Transverse colon (tissue), 4 donors: ENCODE measurements at regions of chr2 and their contacts with region 1.

Region 1: GRCh38 chr2:40281021-40281940 is 170.6 kb downstream of the SLC8A1 start:
- DNase-seq: no peak
- H3K4me3 ChIP-seq: no peak overlapping the region
- H3K27ac ChIP-seq: peak overlapping the region; percentile 59 to 80 (median 70)
- H3K4me1 ChIP-seq: peaks cover 0 to 29% (median 2%) of the 10 kb centered on the region in 4 donors
- H3K27me3 ChIP-seq: no peaks in the 10 kb centered on the region
- CTCF ChIP-seq: no peak
- EP300 ChIP-seq: no peak
- POLR2A ChIP-seq: no peak

Region 2: DNA sequence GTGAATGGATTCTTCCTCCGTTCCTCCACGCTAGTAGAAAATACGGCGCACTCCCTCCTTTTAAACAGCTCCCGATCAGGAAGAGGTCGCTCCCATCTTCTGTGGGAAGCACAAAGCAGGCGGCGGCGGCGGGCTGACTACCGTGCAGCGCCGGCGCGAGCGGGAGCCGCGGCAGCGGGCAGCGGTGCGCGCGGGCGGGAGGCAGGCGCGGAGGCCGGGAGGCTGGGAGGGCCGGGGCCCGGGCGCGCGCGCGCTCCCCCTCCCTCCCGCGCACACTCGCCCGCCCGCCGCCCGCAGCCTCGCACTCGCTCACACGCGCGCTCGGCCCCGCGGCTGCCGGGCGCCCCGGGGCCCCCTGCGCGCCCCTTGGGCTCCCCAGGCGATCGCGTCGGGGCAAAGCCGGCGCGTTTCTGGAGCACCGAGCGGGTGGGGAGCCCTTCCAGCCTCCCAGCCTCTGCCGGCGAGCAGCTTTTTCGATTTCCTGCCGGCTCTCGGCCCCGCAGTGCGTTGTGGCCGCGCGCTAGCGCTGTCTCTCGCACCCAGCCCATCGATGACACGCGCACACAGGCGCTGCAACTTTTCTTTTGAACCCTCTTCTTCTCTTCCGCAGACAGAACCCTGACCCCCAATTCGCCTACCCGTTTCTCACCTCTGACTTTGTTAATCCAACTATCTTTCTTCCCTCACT is 170.8 kb after region 1 on chr2 and contains the start of gene SLC8A1:
- in situ Hi-C with region 1: no loop called
- intact Hi-C with region 1: loop called (anchors 5 kb)
- DNase-seq: no peak
- H3K4me3 ChIP-seq: peak within 1 kb of the TSS; percentile 42 to 53 (median 47)
- H3K27ac ChIP-seq: peak within 1 kb of the TSS; percentile 85 to 91 (median 88)
- H3K4me1 ChIP-seq: peaks cover 0 to 9% (median 4%) of the 10 kb centered on the region in 4 donors
- H3K27me3 ChIP-seq: peaks cover 6% of the 10 kb centered on the region
- CTCF ChIP-seq: no peak
- EP300 ChIP-seq: no peak
- POLR2A ChIP-seq: no peak
- total RNA-seq, gene SLC8A1: 22.8 to 65.5 (median 42.0) TPM